Activated CD4-positive, alpha-beta T cell treated with anti-CD3 and anti-CD28 coated beads, Interleukin-2, amount 10 ng/mL, durations not matched to agents 24 days and 14 days (primary cell): ENCODE measurements at regions of chr2 and their contacts with region 1.

Region 1: DNA sequence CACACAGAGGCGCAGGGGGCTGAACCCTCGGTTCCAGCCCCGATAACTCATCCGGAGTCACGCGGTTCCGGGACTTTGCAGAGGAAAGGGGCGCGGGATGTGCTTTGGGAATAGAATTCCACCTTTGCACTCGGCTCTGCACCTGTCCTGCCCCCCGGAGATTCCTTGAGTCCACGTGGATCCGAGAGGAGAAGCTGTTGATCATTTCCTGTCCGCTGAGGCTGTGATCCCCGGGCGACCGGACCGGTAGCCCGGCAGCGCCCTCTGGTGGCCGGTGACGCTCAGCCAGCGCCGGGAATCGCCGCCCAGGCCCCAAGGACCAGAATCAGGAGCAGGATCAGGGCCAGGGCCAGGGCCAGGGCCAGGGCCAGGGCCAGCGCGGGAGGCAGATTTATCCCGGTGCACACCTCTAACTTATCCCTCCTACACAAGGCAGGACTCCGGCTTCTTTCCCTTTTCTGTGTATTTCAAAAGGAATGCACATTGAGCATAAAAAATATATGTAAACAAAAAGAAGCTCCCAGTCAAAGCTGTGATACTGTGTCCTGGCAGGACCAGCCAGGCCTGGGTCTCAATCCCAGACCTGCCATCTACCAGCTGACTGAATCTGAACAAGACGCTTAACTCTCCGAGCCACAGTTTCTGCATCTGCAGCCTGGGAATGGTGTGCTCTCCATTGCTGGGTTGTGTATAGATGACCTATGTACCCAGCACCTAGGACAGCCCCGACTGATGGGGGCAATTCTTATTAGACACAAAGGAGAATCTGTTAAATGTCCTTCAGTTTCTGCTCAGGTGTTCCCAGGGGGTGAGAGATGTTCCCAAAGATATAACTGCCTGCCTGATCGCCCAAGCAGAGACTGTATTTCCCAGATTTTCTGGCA is 8.5 kb upstream of the SPATA3 start:
- DNase-seq: peak; percentile 94
- H3K4me3 Mint-ChIP-seq: peak overlapping the region; percentile 65
- H3K27ac Mint-ChIP-seq: peak overlapping the region; percentile 11
- H3K4me1 Mint-ChIP-seq: peaks cover 19% of the 10 kb centered on the region
- H3K27me3 Mint-ChIP-seq: peaks cover 34% of the 10 kb centered on the region

Region 2: DNA sequence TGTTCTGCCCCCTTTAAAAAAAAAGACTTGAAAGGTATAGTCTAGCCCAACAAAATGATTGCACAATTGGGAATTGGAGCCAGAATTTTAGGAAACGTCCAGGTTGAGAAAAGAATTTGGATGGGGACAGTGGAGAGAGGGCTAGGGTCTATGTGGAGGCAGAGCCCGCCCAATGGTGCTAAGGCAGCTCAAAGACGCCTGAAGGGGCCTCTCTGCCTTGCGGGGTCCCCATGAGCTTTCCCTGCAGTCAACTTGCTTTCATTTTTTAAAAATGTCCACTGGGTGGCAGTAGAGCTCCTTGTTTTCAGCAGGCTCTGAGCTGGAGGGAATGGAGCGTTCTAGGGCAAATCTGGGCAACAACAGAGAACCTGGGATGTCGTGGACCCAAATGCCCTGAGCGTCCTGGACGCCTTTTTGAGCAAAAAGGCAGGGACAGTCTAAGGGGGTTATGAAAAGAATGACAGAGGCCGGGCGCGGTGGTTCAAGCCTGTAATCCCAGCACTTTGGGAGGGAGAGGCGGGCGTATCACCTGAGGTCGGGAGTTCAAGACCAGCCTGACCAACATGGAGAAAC is 162.9 kb before region 1 on chr2:
- intact Hi-C with region 1: loop called (anchors 1 kb)
- DNase-seq: peak; percentile 89
- H3K4me3 Mint-ChIP-seq: peak overlapping the region; percentile 55
- H3K27ac Mint-ChIP-seq: no peak overlapping the region
- H3K4me1 Mint-ChIP-seq: peaks cover 11% of the 10 kb centered on the region
- H3K27me3 Mint-ChIP-seq: peaks cover 36% of the 10 kb centered on the region

Region 3: GRCh38 chr2:230847883-230848388 is 139.4 kb before region 1 on chr2:
- intact Hi-C with region 1: loop called (anchors 1 kb)
- DNase-seq: peak; percentile 95
- H3K4me3 Mint-ChIP-seq: no peak overlapping the region
- H3K27ac Mint-ChIP-seq: peak overlapping the region; percentile 1
- H3K4me1 Mint-ChIP-seq: peaks cover 13% of the 10 kb centered on the region
- H3K27me3 Mint-ChIP-seq: peaks cover 66% of the 10 kb centered on the region

Region 4: DNA sequence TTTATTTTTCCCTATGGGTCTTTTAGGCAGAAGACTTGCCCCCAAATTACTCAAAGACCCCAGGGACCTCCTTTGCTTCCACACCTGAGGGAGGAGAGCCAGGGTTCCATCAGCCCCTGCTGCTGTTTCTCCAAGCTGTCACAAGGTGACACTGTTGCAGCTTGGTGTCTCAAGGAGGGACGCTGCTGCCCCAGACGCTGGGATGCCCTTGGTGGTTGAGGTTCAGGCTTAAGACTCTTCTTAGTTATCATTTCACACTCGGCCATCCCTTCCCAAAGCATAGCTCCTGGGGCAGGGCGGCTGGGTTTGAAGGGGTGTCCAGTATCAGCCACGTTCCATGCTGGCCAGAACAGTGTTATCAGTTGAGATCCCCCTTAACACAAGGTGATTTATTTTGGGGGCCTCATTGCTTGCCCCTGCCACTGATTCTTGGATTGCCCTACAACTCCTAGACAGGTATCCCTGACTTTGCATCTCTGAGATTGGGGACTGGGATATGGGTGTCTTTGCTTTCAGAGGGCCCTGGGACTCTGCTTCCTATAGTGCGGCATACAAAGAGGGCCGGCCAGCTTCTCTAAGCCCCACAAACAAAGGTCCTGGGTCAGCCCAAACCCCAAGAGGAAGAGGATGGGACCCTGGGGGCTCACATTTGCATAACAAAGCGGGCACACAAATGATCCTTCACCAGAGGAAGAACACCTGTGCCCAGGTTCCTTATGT is 85.0 kb before region 1 on chr2:
- intact Hi-C with region 1: loop called (anchors 1 kb)
- DNase-seq: peak; percentile 80
- H3K4me3 Mint-ChIP-seq: no peak overlapping the region
- H3K27ac Mint-ChIP-seq: no peak overlapping the region
- H3K4me1 Mint-ChIP-seq: peaks cover 27% of the 10 kb centered on the region
- H3K27me3 Mint-ChIP-seq: peaks cover 47% of the 10 kb centered on the region

Region 5: GRCh38 chr2:230924470-230925341 is 62.7 kb before region 1 on chr2 and contains the start of gene GPR55:
- intact Hi-C with region 1: loop called (anchors 1 kb)
- DNase-seq: peak; percentile 76
- H3K4me3 Mint-ChIP-seq: peak within 1 kb of the TSS; percentile 66
- H3K27ac Mint-ChIP-seq: peak within 1 kb of the TSS; percentile 82
- H3K4me1 Mint-ChIP-seq: peaks cover 42% of the 10 kb centered on the region
- H3K27me3 Mint-ChIP-seq: peaks cover 24% of the 10 kb centered on the region
- total RNA-seq, gene GPR55: 0.23 and 0.38 TPM in 2 replicates

Region 6: DNA sequence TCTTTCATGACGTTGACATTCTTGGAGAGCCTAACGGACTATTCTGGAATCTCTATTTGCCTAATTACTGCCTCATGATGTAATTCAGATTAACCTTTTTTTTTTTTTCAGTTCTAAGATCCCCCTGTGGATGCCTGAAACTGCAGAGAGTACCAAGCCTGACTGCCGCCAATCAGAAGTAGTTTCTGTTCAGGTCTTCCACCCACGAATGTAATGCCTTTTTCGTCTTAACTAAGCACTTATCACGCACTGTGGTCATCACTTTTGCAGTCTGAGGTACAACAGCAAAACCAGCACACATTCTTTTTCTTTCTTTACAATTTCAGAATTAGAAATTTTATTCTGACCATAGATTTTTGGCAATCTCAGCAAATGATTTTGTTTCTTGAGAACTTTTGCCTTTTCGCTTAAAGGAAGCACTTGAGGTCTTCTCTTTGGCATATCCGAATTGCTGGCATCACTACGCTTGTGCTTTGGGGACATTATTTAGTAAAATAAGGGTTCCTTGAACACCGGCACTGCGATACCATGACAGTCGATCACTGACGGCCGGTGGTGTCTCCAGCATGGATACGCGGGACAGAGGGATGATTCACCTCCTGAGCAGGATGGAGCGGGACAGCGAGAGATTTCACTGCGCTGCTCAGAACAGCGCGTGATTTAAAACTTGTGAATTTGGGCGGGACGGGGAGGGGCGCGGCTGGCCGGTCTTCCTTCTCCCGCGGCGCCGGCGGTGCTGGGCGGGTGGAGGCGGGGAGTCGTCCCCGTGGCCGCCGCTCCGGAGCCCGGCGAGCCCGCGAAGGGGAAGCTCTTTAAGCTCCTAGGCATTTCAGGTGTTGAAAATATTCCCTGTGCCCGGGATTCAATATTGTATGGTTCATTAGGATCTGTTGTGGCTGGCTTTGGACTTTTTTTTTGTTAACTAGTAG is 30.3 kb before region 1 on chr2:
- intact Hi-C with region 1: loop called (anchors 1 kb)
- DNase-seq: peak; percentile 69
- H3K4me3 Mint-ChIP-seq: peak overlapping the region; percentile 83
- H3K27ac Mint-ChIP-seq: peak overlapping the region; percentile 77
- H3K4me1 Mint-ChIP-seq: peaks cover 22% of the 10 kb centered on the region
- H3K27me3 Mint-ChIP-seq: peaks cover 75% of the 10 kb centered on the region

Region 7: DNA sequence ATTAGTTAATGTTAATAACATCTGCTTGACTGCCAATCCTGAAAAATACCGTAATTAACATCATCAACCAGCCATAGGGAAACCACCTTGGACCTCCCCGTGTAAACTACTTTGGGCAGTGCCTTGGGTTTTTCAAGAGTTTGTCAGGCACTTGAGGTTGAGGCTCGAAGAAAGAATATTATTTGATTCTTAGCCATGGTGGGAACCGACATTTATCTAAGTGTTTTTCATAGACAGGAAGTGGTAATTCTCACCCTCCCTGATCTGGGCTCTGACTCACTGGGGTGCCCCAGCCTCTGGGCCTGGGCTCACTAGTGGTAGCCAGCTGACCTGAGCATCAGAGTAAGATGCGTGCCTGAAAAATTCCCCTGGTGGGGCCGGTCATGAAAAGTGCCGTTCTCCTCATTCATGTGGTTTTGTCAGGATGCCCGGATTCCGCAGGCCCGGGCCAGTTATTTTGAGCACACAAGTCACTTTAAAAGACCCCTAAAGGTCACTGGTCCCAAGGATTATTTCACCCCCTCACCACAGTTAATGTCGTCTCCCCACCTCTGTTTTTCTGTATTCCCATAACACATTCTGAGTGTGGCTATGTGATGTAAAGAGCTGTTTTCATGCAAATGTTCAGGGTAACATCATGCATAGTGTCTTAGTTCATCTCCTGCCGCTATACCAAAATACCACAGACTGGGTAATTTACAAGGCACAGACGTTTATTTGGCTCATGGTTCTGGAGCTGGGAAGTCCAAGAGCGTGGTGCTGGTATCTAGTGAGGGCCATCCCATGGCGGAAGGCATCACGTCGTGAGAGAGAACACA is 13.1 kb before region 1 on chr2:
- intact Hi-C with region 1: loop called (anchors 1 kb)
- DNase-seq: peak; percentile 86
- H3K4me3 Mint-ChIP-seq: peak overlapping the region; percentile 24
- H3K27ac Mint-ChIP-seq: peak overlapping the region; percentile 61
- H3K4me1 Mint-ChIP-seq: peaks cover 33% of the 10 kb centered on the region
- H3K27me3 Mint-ChIP-seq: peaks cover 28% of the 10 kb centered on the region